ENCODE measurements at regions of chr11 and their contacts with region 1.

Region 1: DNA sequence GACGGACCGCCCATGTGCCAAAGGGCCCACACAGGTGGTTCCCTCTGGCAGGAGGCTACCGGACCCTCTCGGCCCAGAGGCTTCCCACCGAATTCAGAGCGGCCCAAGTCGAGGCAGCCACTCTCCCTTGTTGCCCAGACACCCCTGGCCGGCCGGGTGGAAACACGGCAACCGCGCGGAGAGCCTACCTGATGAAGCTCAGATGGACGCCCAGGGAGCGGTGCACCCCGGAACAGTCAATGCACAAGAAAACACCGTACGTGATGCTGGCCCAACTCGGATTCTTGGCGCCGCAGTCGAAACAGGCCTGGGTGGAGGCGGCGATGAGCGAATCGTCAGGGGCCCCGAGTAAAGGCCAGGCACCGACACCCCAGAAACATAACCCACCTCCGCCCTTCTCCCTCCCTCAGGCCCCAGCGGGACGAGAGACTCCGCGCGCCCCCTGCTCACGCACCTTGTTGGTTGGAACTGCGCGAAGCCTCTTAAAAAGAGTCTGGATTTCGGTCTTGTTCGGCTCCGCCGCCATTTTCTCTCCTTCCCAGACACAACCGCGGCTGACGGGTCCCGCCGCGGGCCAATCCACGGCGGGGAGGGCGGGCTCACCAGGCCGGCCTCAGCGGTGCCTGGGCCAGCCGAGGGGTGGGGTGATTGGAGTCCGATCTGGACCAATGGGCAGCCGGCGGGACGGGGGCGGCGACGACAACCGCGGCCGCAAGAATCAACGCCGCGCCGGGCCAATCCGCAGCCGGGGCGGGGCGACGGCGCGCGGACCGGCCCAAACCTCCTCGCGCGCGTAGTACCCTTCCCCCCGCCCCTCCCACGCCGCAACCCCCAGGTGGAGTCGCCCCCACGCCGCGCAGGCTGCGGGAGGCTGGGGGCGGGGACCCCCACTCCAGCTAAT is at the start of gene ARFGAP2:
- DNase-seq: peak; percentile 98 to 99
- ATAC-seq: peak; percentile 96
- H3K4me3 ChIP-seq: peak within 1 kb of the TSS; percentile 77 to 78
- H3K27ac ChIP-seq: peak within 1 kb of the TSS; percentile 38 to 92
- H3K4me1 ChIP-seq: no peaks in the 10 kb centered on the region
- H3K27me3 ChIP-seq: no peaks in the 10 kb centered on the region
- total RNA-seq, gene ARFGAP2: 65.8 to 68.2 TPM

Region 2: DNA sequence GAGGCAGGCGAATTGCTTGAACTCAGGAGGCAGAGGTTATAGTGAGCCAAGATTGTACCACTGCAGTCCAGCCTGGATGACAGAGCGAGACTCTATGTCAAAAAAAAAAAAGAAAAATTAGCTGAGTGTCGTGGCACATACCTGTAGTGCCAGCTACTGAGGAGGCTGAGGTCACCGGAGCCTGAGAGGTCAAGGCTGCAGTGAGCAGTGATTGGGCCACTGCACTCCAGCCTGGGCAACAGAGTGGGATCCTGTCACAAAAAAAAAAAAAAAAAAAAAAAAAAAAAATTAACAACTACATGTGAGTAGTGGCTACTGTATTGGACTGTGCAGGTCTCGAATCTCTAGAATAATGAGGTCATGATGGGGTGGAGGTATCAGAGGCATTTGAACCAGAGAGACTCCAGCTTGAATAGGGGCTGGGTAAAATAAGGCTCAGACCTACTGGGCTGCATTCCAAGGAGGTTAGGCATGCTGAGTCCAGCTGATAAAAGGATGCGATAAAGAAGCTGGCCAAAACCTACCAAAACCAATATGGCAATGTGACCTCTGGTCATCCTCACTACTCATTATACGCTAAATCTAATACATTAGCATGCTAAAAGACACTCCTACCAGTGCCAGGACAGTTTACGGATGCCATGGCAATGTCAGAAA is 15.4 kb after region 1 on chr11:
- intact Hi-C with region 1: no loop called
- DNase-seq: no peak
- ATAC-seq: no peak
- H3K4me3 ChIP-seq: no peak overlapping the region
- H3K27ac ChIP-seq: no peak overlapping the region
- H3K4me1 ChIP-seq: no peaks in the 10 kb centered on the region
- H3K27me3 ChIP-seq: no peaks in the 10 kb centered on the region

Region 3: GRCh38 chr11:47259178-47259977 is 82.8 kb after region 1 on chr11:
- intact Hi-C with region 1: loop called in 1 of 2 experiments (anchors 10 kb)
- DNase-seq: peak in 1 of 2 donors; percentile 61
- ATAC-seq: no peak
- H3K4me3 ChIP-seq: no peak overlapping the region
- H3K27ac ChIP-seq: no peak overlapping the region
- H3K4me1 ChIP-seq: no peaks in the 10 kb centered on the region
- H3K27me3 ChIP-seq: no peaks in the 10 kb centered on the region

Region 4: GRCh38 chr11:47269002-47269828 is 92.6 kb after region 1 on chr11:
- intact Hi-C with region 1: loop called (anchors 5 kb)
- DNase-seq: peak; percentile 93 to 95
- ATAC-seq: peak; percentile 96
- H3K4me3 ChIP-seq: peak overlapping the region; percentile 72 to 93
- H3K27ac ChIP-seq: peak overlapping the region; percentile 2 to 92
- H3K4me1 ChIP-seq: no peaks in the 10 kb centered on the region
- H3K27me3 ChIP-seq: no peaks in the 10 kb centered on the region

Measured in aorta (tissue), 5 donors.